ENCODE measurements at regions of chr3 and their contacts with region 1.

Region 1: GRCh38 chr3:64520334-64520733 is 167.5 kb downstream of the ADAMTS9 start:
- DNase-seq: no peak
- H3K4me3 ChIP-seq: no peak overlapping the region
- H3K27ac ChIP-seq: no peak overlapping the region
- H3K4me1 ChIP-seq: no peaks in the 10 kb centered on the region
- H3K27me3 ChIP-seq: no peaks in the 10 kb centered on the region
- CTCF ChIP-seq: no peak
- POLR2A ChIP-seq: no peak

Region 2: DNA sequence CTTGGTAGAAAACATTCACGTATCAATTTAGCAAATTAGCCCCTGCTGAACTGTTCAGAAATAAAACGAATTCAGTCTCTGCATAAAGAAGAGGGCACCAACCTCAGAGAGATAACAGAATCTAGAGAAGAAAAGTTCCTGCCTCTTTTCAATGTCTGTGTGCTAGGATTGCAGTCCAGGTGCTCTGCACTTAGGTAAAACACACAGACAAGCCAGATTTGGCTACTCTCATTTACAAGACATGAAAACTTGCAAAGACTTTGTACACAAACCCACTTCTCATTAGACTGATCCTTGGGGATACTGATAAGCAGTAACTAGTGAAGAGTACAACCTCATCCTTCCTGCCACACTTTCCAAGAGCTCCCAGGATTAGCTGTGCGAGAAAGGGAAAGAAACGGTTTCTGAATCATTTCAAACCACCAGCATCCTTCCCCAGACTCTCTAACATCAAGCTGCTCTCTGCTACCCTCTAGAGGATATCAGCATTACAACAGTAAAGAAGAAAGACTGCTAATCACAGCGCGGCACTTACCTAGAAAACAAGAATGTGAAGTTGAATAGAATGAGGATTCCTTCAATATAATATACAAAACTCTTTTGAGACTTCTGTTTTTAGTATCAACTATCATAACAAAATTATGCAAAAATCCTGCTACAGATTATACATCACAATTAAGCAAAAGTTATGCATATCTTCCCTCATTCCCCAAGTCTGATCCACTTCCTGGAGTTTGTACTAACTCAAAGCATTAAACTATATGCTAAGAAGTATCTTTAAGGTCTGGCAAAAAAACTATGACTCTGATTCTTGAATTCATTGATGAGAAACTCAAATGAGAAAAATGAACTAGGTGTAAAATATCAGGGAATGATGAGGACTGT is 1212.0 kb after region 1 on chr3:
- intact Hi-C with region 1: loop called (anchors 10 kb)
- DNase-seq: no peak
- H3K4me3 ChIP-seq: no peak overlapping the region
- H3K27ac ChIP-seq: no peak overlapping the region
- H3K4me1 ChIP-seq: peaks cover 9% of the 10 kb centered on the region
- H3K27me3 ChIP-seq: no peaks in the 10 kb centered on the region
- CTCF ChIP-seq: peak; percentile 39 to 63 (median 59)
- POLR2A ChIP-seq: no peak

Measured in vagina (tissue), 2 donors.